H1 (cell line): ENCODE measurements at regions of chr22 and their contacts with region 1.

Region 1: GRCh38 chr22:26461188-26461810 is 22.3 kb downstream of the HPS4 start:
- DNase-seq: peak; percentile 53 to 90
- H3K4me3 ChIP-seq: no peak overlapping the region
- H3K27ac ChIP-seq: no peak overlapping the region
- H3K4me1 ChIP-seq: no peaks in the 10 kb centered on the region
- H3K27me3 ChIP-seq: no peaks in the 10 kb centered on the region
- CTCF ChIP-seq: peak; percentile 58 to 80 (median 76)
- EP300 ChIP-seq: no peak
- POLR2A ChIP-seq: no peak
- RAD21 ChIP-seq: peak; percentile 81 to 84

Region 2: DNA sequence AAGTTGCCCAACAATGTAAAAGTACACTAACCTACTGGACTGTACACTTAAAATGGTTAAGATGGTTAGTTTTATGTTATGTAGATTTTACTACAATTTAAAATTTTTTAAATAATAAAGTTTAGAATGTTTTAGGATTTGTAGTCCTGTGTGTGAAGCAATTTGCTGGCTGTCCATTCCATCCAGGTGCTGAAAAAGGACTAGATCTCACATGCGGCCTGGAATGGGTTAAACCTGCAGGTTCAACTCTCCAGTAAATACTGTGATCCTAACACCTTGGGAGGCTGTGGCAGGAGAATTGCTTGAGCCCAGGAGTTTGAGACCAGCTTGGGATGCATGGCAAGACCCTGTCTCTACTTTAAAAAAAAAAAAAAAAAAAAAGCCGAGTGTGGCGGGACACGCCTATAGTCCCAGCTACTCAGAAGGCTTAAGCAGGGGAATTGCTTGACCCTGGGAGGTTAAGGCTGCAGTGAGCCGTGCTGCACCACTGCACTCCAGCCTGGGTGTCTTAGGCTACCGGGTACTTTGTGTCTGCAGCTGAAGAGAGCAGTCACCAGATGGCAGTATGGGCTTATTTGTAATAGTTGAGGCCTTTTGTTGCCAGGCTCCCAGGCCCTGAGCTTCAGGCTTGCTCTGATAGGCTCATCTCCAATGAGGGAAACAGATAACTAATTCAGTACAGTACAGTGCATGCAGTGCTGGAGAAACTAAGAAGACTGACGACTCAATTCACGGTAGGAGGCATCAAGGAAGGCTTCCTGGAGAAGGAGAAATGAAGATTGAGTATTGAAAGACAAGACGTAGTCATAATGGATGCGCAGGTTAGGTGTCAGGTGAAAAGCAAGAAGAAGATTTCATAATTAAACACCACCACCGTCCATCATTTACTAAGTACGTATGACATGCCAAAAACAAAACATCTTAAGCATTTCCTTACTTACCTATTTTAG is 97.0 kb before region 1 on chr22:
- CTCF ChIA-PET with region 1: interaction called, 43 read pairs
- POLR2A ChIA-PET with region 1: interaction called, 3 read pairs
- DNase-seq: peak; percentile 63 to 70
- H3K4me3 ChIP-seq: no peak overlapping the region
- H3K27ac ChIP-seq: no peak overlapping the region
- H3K4me1 ChIP-seq: peaks cover 0 to 4% (median under 1%) of the 10 kb centered on the region in 4 experiments; a peak in 3 of 7 replicates
- H3K27me3 ChIP-seq: no peaks in the 10 kb centered on the region; a peak in 2 of 7 replicates
- CTCF ChIP-seq: peak; percentile 63 to 91 (median 81)
- EP300 ChIP-seq: no peak
- POLR2A ChIP-seq: no peak
- RAD21 ChIP-seq: peak; percentile 84 to 93

Region 3: DNA sequence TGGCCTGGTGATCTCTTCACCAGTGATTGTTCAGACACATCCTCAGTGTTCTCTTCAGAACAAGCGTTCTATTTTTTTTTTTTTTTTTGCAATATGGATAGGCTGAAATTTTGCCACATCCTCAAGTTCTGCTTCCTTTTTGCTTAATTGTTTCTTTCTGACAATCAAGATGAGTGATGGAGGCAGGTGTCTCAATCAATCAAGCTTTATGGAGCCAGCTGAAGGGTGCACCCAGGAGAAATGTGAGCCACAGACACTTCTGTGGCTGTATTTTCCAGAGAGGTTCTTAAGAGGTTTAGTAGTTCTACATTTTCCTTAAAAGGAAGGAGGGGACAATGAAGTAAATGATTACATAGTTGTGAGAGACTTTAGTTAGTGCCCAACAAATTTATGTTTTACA is 76.1 kb before region 1 on chr22:
- CTCF ChIA-PET with region 1: interaction called, 98 read pairs
- POLR2A ChIA-PET with region 1: no interaction called
- DNase-seq: no peak
- H3K4me3 ChIP-seq: no peak overlapping the region
- H3K27ac ChIP-seq: no peak overlapping the region
- H3K4me1 ChIP-seq: peaks cover 0 to 5% (median 0%) of the 10 kb centered on the region in 4 experiments; a peak in 2 of 7 replicates
- H3K27me3 ChIP-seq: no peaks in the 10 kb centered on the region
- CTCF ChIP-seq: no peak
- EP300 ChIP-seq: no peak
- POLR2A ChIP-seq: no peak
- RAD21 ChIP-seq: no peak

Region 4: DNA sequence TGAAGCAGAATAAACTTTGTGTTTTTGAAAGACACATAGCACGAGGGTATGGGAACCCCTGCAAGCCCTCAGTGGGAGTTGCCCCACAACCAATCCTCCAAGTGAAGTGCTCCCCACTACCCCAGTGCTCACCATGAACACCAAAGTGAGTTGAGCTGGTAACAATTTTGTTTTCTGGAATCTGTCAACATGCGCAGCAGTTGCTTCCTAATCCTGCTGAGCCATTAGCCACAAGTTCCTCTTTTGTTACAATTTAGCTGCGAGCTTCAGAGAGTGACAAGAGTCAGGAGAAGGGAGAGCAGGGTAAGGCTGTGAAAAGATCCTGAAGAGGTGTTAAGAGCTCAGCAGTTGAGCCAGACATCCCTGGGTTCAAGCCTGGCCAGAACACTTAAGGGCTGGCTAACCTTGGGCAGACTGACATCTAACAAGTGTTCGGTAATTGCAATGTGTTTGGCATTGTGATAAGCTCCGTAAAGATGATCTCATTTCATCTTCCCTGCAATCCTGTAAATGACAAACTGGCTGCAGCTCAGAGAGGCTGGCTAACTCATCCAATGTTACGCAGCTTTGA is 56.4 kb before region 1 on chr22:
- CTCF ChIA-PET with region 1: interaction called, 15 read pairs
- POLR2A ChIA-PET with region 1: interaction called, 4 read pairs
- DNase-seq: no peak
- H3K4me3 ChIP-seq: no peak overlapping the region
- H3K27ac ChIP-seq: no peak overlapping the region
- H3K4me1 ChIP-seq: no peaks in the 10 kb centered on the region; a peak in 2 of 7 replicates
- H3K27me3 ChIP-seq: peaks cover 0 to 2% (median 0%) of the 10 kb centered on the region in 4 experiments; a peak in 1 of 7 replicates
- CTCF ChIP-seq: no peak
- EP300 ChIP-seq: no peak
- POLR2A ChIP-seq: no peak
- RAD21 ChIP-seq: no peak

Region 5: GRCh38 chr22:26436903-26437515 is 24.3 kb before region 1 on chr22:
- CTCF ChIA-PET with region 1: interaction called, 12 read pairs
- POLR2A ChIA-PET with region 1: no interaction called
- DNase-seq: no peak
- H3K4me3 ChIP-seq: no peak overlapping the region
- H3K27ac ChIP-seq: no peak overlapping the region
- H3K4me1 ChIP-seq: no peaks in the 10 kb centered on the region
- H3K27me3 ChIP-seq: no peaks in the 10 kb centered on the region
- CTCF ChIP-seq: no peak
- EP300 ChIP-seq: no peak
- POLR2A ChIP-seq: no peak
- RAD21 ChIP-seq: no peak

Region 6: GRCh38 chr22:26474682-26475081 is 13.4 kb after region 1 on chr22:
- CTCF ChIA-PET with region 1: interaction called, 8 read pairs
- POLR2A ChIA-PET with region 1: interaction called, 10 read pairs
- DNase-seq: no peak
- H3K4me3 ChIP-seq: no peak overlapping the region
- H3K27ac ChIP-seq: no peak overlapping the region
- H3K4me1 ChIP-seq: no peaks in the 10 kb centered on the region
- H3K27me3 ChIP-seq: no peaks in the 10 kb centered on the region
- CTCF ChIP-seq: no peak
- EP300 ChIP-seq: no peak
- POLR2A ChIP-seq: no peak
- RAD21 ChIP-seq: no peak

Region 7: DNA sequence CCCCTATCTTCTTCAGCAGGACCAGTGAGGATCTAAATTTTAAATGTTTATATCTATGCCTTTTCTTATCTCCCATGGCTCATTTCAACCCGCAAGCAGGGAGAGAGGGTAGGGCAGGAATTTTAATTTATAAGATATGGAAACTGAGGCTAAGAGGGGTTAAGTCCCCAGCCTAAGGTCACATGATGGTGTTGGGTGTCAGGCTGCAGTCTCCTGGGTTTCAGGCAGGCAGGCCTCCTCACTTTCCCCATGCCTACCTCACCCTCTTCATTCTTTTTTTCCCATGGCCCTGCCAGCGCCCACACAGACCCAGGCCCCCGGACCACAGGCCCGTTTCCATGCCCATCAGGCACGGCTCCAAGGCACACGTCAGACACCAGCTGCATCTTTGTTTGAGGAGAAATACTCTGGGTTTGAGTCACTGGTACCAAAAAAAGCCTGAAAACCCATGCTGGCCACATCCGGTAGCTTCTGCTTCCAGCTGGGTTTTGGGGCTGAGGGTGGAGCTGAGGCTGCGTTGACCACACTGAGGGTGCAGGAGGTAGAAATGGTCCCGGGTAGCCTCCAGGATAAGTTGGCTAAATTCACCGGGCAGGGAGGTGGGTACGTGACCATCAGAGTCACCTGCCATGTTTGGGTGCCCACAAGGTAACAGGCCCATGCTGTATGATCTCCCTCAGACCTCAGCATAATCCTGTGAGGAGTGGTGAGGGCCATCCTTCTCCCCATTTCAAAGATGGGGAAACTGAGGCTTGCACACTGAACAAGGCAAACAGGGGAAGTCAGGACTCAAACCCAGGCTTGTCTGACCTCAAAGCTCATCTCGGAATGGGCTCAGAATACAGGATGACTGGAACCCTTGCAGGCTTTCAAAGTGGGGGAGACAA is 149.0 kb after region 1 on chr22:
- CTCF ChIA-PET with region 1: no interaction called
- POLR2A ChIA-PET with region 1: no interaction called
- DNase-seq: no peak
- H3K4me3 ChIP-seq: no peak overlapping the region
- H3K27ac ChIP-seq: no peak overlapping the region
- H3K4me1 ChIP-seq: peaks cover 8 to 23% (median 17%) of the 10 kb centered on the region in 4 experiments
- H3K27me3 ChIP-seq: peaks cover 5 to 27% (median 25%) of the 10 kb centered on the region in 4 experiments
- CTCF ChIP-seq: no peak
- EP300 ChIP-seq: no peak
- POLR2A ChIP-seq: no peak
- RAD21 ChIP-seq: no peak

Region 8: GRCh38 chr22:26835929-26836528 is 374.7 kb after region 1 on chr22:
- CTCF ChIA-PET with region 1: no interaction called
- POLR2A ChIA-PET with region 1: no interaction called
- DNase-seq: peak; percentile 78 to 94
- H3K4me3 ChIP-seq: no peak overlapping the region
- H3K27ac ChIP-seq: no peak overlapping the region
- H3K4me1 ChIP-seq: peaks cover 2 to 8% (median 5%) of the 10 kb centered on the region in 4 experiments; a peak in 5 of 7 replicates
- H3K27me3 ChIP-seq: no peaks in the 10 kb centered on the region; a peak in 2 of 7 replicates
- CTCF ChIP-seq: peak; percentile 66 to 89 (median 88)
- EP300 ChIP-seq: no peak
- POLR2A ChIP-seq: no peak
- RAD21 ChIP-seq: peak; percentile 78 to 86